Activated CD4-positive, alpha-beta memory T cell treated with anti-CD3 and anti-CD28 coated beads for 36 hours (primary cell): ENCODE measurements at regions of chr20 and their contacts with region 1.

Region 1: DNA sequence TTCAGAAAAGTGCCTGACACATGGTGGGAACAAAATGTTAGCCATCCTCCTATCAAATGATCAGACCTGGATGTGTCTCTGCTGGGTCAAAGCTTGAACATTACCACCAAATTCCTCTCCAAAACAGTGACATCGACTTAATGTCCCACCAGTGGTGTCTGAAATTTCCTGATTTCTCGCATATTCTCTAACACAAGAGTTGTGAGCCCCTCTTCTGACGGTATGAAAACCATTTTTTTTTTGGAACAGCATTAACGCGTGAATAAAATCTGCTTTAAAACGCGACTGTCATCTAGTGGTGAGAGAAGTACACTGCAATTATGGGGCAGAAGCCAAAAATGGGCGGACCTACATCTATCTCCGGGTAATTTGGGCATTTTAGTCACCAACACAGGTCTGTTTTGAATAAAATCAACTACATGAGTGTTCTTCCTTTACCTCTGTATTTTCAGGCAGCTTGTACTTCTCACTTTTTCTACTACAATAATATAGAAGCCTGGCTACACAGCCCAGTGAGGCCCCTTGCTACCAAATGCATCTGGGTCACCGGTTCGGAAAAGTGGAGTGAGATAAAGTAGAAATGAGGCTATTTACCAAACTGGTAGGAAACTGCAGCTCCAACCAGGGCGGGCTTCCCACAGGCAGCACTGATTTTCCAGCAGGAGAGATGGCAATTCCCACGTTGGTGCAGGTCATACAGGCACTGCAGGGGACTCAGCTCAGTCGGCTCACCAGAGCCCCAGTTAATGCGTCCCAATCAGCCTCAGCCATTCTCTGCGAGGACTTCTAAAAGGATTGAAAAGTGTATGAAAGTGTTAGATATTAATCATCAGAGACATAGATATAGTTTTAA is 27.4 kb downstream of the MGME1 start:
- DNase-seq: peak; percentile 55
- H3K4me3 Mint-ChIP-seq: no peak overlapping the region
- H3K27ac Mint-ChIP-seq: no peak overlapping the region
- H3K4me1 Mint-ChIP-seq: peaks cover 28% of the 10 kb centered on the region
- H3K27me3 Mint-ChIP-seq: peaks cover 3% of the 10 kb centered on the region

Region 2: GRCh38 chr20:17558154-17558940 is 437.8 kb before region 1 on chr20:
- CTCF ChIA-PET with region 1: no interaction called
- POLR2A ChIA-PET with region 1: no interaction called
- intact Hi-C with region 1: loop called (anchors 1 kb)
- DNase-seq: peak; percentile 59
- H3K4me3 Mint-ChIP-seq: peak overlapping the region; percentile 14
- H3K27ac Mint-ChIP-seq: peak overlapping the region; percentile 87
- H3K4me1 Mint-ChIP-seq: peaks cover 38% of the 10 kb centered on the region
- H3K27me3 Mint-ChIP-seq: no peaks in the 10 kb centered on the region

Region 3: GRCh38 chr20:17611540-17612286 is 384.5 kb before region 1 on chr20:
- CTCF ChIA-PET with region 1: no interaction called
- POLR2A ChIA-PET with region 1: no interaction called
- intact Hi-C with region 1: loop called (anchors 5 kb)
- DNase-seq: peak; percentile 12
- H3K4me3 Mint-ChIP-seq: peak overlapping the region; percentile 57
- H3K27ac Mint-ChIP-seq: peak overlapping the region; percentile 89
- H3K4me1 Mint-ChIP-seq: peaks cover 38% of the 10 kb centered on the region
- H3K27me3 Mint-ChIP-seq: no peaks in the 10 kb centered on the region

Region 4: GRCh38 chr20:17825960-17826843 is 170.0 kb before region 1 on chr20:
- CTCF ChIA-PET with region 1: no interaction called
- POLR2A ChIA-PET with region 1: no interaction called
- intact Hi-C with region 1: loop called (anchors 1 kb)
- DNase-seq: peak; percentile 64
- H3K4me3 Mint-ChIP-seq: no peak overlapping the region
- H3K27ac Mint-ChIP-seq: no peak overlapping the region
- H3K4me1 Mint-ChIP-seq: peaks cover 12% of the 10 kb centered on the region
- H3K27me3 Mint-ChIP-seq: no peaks in the 10 kb centered on the region

Region 5: GRCh38 chr20:17904027-17904426 is 92.2 kb before region 1 on chr20:
- CTCF ChIA-PET with region 1: interaction called, 3 read pairs
- POLR2A ChIA-PET with region 1: no interaction called
- intact Hi-C with region 1: loop called (anchors 1 kb)
- DNase-seq: peak; percentile 41
- H3K4me3 Mint-ChIP-seq: no peak overlapping the region
- H3K27ac Mint-ChIP-seq: no peak overlapping the region
- H3K4me1 Mint-ChIP-seq: peaks cover 5% of the 10 kb centered on the region
- H3K27me3 Mint-ChIP-seq: peaks cover under 1% of the 10 kb centered on the region

Region 6: DNA sequence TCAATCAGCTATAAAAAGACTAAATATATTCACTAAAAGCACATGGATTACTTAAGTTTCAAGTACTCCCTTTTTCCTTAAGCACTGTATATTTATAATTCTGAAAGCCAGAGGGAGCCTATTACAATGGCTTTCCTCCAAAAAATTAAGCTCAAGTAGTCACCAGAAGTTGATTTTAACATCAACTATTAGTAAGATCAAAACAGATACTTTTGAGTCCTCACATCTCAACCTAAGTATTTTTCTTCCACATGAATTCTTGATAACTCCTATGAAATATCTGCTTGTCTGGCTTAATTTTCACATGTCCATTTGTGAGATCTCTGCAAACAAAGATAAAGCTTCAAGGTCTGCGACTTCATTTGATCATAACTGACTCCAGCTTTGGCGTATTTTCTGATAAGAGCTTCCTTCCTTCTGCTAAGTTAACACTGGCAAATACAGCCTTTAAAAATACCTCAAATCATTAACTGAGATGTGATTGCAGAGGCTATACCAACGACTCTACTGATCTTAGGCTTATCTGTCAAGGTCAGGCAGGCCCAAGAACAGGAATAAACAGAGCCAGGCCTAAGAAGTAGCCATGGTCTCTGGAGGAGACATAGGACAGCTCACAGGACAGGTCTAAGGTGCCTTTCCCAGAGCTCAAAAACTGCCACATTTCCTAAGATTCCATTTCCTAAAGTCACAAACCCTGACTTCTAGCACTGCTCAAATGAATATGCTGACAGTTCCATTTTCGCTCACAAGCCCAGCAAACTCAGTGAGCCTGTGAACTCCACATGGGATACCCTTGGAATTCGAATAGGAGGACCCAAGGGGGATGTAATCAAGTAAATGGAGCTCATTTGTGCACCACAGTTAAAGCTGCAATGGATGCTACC is 37.6 kb before region 1 on chr20:
- CTCF ChIA-PET with region 1: interaction called, 42 read pairs
- POLR2A ChIA-PET with region 1: interaction called, 13 read pairs
- intact Hi-C with region 1: loop called (anchors 1 kb)
- DNase-seq: no peak
- H3K4me3 Mint-ChIP-seq: no peak overlapping the region
- H3K27ac Mint-ChIP-seq: peak overlapping the region; percentile 49
- H3K4me1 Mint-ChIP-seq: peaks cover 87% of the 10 kb centered on the region
- H3K27me3 Mint-ChIP-seq: no peaks in the 10 kb centered on the region

Region 7: DNA sequence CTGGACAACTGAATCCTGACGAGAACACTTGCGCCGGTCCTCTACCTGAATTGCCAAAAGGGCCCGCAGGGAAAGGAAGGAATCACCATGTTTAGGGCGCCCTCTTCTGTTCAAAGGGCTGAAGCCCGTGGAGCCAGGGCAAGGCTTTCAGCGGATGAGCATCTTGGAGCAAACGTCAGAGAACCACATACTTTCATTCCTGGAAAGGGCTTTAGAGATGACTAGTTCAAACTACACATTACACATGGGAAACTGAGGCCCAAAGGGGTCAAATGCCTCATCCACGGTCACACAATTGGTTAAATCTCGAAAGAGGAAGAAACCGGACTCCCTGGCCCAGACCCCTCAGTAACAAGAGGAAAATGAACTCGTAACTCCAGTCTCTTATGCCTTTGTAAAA is 280.6 kb after region 1 on chr20:
- CTCF ChIA-PET with region 1: no interaction called
- POLR2A ChIA-PET with region 1: no interaction called
- intact Hi-C with region 1: loop called (anchors 1 kb)
- DNase-seq: peak; percentile 84
- H3K4me3 Mint-ChIP-seq: no peak overlapping the region
- H3K27ac Mint-ChIP-seq: no peak overlapping the region
- H3K4me1 Mint-ChIP-seq: peaks cover 2% of the 10 kb centered on the region
- H3K27me3 Mint-ChIP-seq: peaks cover 32% of the 10 kb centered on the region